Activated CD4-positive, alpha-beta memory T cell treated with anti-CD3 and anti-CD28 coated beads for 36 hours (primary cell): ENCODE measurements at regions of chr5 and their contacts with region 1.

Region 1: DNA sequence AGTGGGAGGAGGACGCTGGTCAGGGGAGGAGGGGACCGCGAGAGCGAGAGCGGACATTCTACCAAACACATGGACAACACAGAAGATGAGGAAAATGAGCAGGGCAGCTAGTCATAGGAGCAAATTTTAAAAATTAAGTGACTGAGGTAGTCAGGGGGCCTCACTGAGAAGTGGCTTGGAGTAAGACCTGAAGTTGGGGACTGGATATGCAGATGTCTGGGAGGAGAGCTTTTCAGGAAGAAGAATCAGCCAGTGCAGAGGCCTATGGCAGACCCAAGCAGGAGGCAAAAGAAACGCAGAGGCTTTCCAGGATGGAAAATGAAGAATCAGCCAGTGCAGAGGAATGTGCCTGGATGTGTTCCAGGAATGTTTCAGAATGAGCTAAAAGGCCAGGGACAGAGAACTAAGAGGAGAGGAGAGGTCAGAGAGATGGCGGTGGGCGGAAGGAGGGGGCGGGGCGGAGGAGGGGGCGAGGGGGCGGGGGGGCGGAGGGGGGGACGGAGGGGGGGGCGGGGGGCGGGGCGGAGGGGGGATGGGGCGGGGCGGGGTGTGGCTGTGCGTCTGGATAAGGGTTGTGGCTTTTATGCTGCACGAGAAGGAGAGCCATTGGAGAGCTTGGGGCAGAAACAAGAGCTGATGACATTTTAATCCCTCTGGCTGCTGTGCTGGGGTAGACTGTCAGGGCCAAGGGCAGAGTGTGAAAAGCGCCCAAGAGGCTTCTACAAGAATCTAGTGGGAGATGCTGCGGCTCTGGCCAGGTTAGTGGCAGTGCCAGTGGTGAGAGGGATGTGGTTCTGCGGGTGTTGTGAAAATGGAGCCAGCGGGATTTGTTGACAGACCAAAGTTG is 129.6 kb downstream of the KCNIP1 start:
- DNase-seq: peak; percentile 20
- H3K4me3 Mint-ChIP-seq: peak overlapping the region; percentile 40
- H3K27ac Mint-ChIP-seq: no peak overlapping the region
- H3K4me1 Mint-ChIP-seq: peaks cover 18% of the 10 kb centered on the region
- H3K27me3 Mint-ChIP-seq: peaks cover 2% of the 10 kb centered on the region

Region 2: DNA sequence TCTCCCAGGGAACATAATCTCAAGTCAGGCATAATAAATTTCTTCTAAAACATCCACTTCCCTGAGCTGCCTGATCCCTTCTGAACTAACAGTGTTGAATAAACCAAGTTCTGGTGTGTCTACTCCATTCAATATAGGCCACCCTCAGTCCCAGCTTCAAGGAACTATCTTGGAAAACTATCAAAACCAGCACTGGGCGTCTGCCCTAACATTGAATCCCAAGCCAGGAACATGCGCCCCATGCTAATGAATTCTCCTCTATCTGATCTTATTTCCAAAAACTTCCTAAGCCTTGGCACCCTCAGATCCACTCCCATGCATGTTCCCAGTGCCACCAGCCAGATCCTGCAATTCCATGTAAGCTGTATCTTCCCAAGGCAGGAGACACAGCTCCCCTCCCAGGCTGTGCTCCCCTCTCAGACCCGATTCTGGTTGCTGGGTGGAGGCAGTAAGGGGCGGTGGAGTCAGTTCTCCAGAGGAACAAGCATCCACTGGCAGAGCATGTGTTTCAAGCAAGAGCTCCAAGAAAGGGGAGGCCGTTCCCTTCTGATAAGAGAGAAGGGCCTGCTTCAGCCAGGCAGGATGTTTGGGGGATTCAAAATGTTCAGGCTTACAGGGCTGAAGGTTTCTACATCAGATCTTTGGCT is 540.9 kb before region 1 on chr5:
- CTCF ChIA-PET with region 1: no interaction called
- POLR2A ChIA-PET with region 1: no interaction called
- intact Hi-C with region 1: no loop called
- DNase-seq: no peak
- H3K4me3 Mint-ChIP-seq: no peak overlapping the region
- H3K27ac Mint-ChIP-seq: no peak overlapping the region
- H3K4me1 Mint-ChIP-seq: no peaks in the 10 kb centered on the region
- H3K27me3 Mint-ChIP-seq: no peaks in the 10 kb centered on the region

Region 3: DNA sequence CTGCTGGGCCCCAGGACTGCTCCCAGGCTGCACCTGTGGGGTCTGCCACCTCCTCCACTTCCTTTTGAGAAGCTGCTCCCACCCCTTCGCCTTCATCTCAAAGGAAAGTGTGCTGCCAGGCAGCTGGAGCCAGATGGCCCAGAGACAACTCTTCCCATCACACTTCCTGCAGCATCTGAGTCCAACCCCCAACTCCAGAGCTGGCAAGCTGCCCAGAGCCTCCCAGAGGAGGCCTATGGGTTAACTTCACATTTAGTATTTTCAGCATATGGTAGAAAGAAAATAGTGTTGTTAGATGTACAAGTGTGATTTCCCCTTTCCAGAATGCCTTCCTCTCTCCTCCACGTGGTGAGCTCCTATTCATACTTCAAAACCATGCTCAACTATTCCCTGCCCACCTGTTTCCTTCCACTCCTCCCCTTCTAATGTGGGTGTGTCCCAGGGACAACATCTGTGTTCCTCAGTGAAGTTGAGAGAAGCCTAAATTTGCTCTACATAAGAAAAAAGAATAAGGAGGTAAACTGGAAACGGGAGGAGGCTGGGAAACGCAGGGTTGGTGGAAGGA is 205.7 kb before region 1 on chr5:
- CTCF ChIA-PET with region 1: interaction called, 145 read pairs
- POLR2A ChIA-PET with region 1: no interaction called
- intact Hi-C with region 1: no loop called
- DNase-seq: no peak
- H3K4me3 Mint-ChIP-seq: no peak overlapping the region
- H3K27ac Mint-ChIP-seq: no peak overlapping the region
- H3K4me1 Mint-ChIP-seq: no peaks in the 10 kb centered on the region
- H3K27me3 Mint-ChIP-seq: peaks cover 4% of the 10 kb centered on the region

Region 4: DNA sequence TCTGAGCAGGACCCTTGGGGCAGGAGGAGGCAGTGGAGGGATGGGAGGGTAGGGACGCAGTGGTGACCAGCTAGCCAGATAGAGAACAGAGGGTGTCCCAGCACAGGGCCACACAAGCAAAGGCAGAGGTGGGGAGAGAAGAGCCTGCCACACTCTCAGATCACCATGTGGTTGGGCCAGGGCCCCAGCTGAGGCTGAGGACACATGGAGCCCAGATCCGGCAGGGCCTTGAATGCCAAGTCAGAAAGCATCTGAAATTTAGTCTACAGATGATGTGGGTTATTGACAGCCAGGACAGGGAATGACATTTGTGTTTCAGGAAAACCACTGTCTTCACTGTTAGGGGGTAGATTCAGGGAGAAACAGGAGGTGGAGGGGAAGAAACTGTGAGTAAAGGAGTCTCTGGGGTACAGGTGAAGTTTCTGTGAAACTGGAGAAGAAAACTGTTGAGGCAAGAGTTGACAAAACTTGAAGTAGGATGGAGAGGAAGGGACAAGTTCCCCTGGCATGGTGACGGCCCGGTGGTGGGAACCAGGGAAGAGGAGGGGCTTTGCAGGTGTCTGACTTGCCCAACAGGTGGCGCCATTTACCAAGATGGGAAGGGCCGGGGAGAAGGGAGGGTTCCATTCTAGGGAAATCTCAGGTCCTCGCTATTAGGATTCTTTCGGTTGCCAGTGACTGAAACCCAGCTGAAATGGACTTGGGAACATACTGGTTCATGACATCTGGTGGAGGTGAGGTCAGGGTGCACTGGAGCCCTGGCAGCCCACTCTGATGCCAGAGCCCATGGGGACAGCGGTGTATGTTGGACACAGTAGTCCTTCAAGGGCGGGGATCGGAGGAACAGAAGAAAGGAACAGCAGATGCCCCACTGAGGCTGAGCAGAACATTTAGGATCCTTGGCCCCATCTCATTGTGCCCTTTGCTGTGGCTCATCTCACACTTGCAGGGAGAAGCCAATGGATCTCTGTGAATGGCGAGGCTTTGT is 29.6 kb before region 1 on chr5:
- CTCF ChIA-PET with region 1: interaction called, 30 read pairs
- POLR2A ChIA-PET with region 1: no interaction called
- intact Hi-C with region 1: loop called (anchors 1 kb)
- DNase-seq: peak; percentile 71
- H3K4me3 Mint-ChIP-seq: no peak overlapping the region
- H3K27ac Mint-ChIP-seq: no peak overlapping the region
- H3K4me1 Mint-ChIP-seq: peaks cover under 1% of the 10 kb centered on the region
- H3K27me3 Mint-ChIP-seq: peaks cover 33% of the 10 kb centered on the region

Region 5: GRCh38 chr5:170614720-170615119 is 18.7 kb before region 1 on chr5:
- CTCF ChIA-PET with region 1: interaction called, 19 read pairs
- POLR2A ChIA-PET with region 1: no interaction called
- intact Hi-C with region 1: no loop called
- DNase-seq: peak; percentile 48
- H3K4me3 Mint-ChIP-seq: no peak overlapping the region
- H3K27ac Mint-ChIP-seq: no peak overlapping the region
- H3K4me1 Mint-ChIP-seq: no peaks in the 10 kb centered on the region
- H3K27me3 Mint-ChIP-seq: peaks cover 11% of the 10 kb centered on the region